ENCODE measurements at regions of chr16 and their contacts with region 1.

Region 1: GRCh38 chr16:70402916-70403659 is 35.8 kb downstream of the ST3GAL2 start:
- DNase-seq: no peak
- H3K4me3 ChIP-seq: no peak overlapping the region
- H3K27ac ChIP-seq: peak overlapping the region; percentile 96
- H3K4me1 ChIP-seq: peaks cover 72% of the 10 kb centered on the region
- CTCF ChIP-seq: no peak

Region 2: DNA sequence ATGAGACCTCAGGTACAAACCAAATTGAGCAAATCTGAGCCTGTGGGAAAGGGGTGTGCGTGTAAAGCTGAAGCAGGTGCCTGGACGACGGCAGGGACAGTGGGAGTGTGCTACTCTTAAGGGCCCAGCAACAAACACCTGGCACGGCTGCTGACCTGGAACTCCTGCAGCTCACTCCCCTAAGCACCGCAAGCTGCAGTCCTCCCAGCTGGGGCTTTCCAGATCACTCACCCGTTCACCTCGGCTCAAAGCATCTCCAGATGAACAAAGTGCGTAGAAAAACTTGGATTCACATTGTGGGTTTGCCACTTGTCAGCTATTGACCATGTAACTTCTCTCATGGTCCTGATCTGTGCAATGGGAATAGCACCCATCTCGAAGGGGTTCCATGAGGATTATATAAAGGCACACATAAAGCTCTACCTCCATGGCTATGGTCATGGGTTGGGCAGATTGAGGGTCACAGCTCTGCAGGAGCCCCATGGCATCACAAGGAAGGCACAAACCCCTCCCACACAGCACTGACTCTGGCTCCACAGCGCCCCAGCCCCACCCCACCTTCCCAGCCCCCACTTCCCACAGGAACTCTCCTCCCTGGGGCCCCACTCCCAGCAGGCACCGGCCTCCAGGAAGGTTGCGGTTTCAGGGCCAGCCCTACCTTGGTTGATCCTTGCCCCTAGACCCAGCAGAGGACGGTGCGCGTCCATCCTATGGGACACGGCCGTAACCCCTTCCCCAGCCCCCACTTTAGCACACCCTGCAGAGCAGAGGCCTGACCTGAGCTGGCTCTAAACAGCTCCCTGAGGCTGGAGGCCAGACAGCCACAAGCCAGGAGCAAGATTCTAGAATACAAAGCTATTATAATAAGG is 13.9 kb after region 1 on chr16:
- CTCF ChIA-PET with region 1: interaction called, 4 read pairs
- POLR2A ChIA-PET with region 1: interaction called, 27 read pairs
- intact Hi-C with region 1: no loop called
- DNase-seq: peak; percentile 73
- H3K4me3 ChIP-seq: peak overlapping the region; percentile 15
- H3K27ac ChIP-seq: peak overlapping the region; percentile 73
- H3K4me1 ChIP-seq: peaks cover 57% of the 10 kb centered on the region
- CTCF ChIP-seq: no peak

Region 3: GRCh38 chr16:70438969-70439862 is 36.1 kb after region 1 on chr16 and contains the start of gene ST3GAL2:
- CTCF ChIA-PET with region 1: no interaction called
- POLR2A ChIA-PET with region 1: interaction called, 17 read pairs
- intact Hi-C with region 1: no loop called
- DNase-seq: peak; percentile 96
- H3K4me3 ChIP-seq: peak within 1 kb of the TSS; percentile 97
- H3K27ac ChIP-seq: peak within 1 kb of the TSS; percentile 68
- H3K4me1 ChIP-seq: peaks cover 31% of the 10 kb centered on the region
- CTCF ChIP-seq: no peak
- total RNA-seq, gene ST3GAL2: 42.6 and 44.6 TPM in 2 replicates

Region 4: GRCh38 chr16:70493802-70494201 is 90.7 kb after region 1 on chr16:
- CTCF ChIA-PET with region 1: no interaction called
- POLR2A ChIA-PET with region 1: no interaction called
- intact Hi-C with region 1: no loop called
- DNase-seq: no peak
- H3K4me3 ChIP-seq: no peak overlapping the region
- H3K27ac ChIP-seq: peak overlapping the region; percentile 38
- H3K4me1 ChIP-seq: peaks cover 22% of the 10 kb centered on the region
- CTCF ChIP-seq: no peak

Region 5: GRCh38 chr16:70523076-70523742 is 120.1 kb after region 1 on chr16 and contains the start of gene COG4:
- CTCF ChIA-PET with region 1: no interaction called
- POLR2A ChIA-PET with region 1: no interaction called
- intact Hi-C with region 1: loop called (anchors 5 kb)
- DNase-seq: peak; percentile 95
- H3K4me3 ChIP-seq: peak within 1 kb of the TSS; percentile 99
- H3K27ac ChIP-seq: peak within 1 kb of the TSS; percentile 88
- H3K4me1 ChIP-seq: peaks cover 47% of the 10 kb centered on the region
- CTCF ChIP-seq: no peak
- total RNA-seq, gene COG4: 41.9 and 48.8 TPM in 2 replicates